ENCODE measurements at regions of chr9 and their contacts with region 1.

Region 1: GRCh38 chr9:114587385-114588202 is at the start of gene ATP6V1G1:
- DNase-seq: peak; percentile 100
- H3K4me3 ChIP-seq: peak within 1 kb of the TSS; percentile 84
- CTCF ChIP-seq: peak in 1 of 3 donors; percentile 27
- POLR2A ChIP-seq: no peak
- total RNA-seq, gene ATP6V1G1: 152 to 214 (median 185) TPM

Region 2: GRCh38 chr9:114518599-114519022 is 69.0 kb before region 1 on chr9:
- intact Hi-C with region 1: loop called (anchors 10 kb)
- DNase-seq: peak in 1 of 2 donors; percentile 68
- H3K4me3 ChIP-seq: no peak overlapping the region
- CTCF ChIP-seq: no peak
- POLR2A ChIP-seq: no peak

Region 3: DNA sequence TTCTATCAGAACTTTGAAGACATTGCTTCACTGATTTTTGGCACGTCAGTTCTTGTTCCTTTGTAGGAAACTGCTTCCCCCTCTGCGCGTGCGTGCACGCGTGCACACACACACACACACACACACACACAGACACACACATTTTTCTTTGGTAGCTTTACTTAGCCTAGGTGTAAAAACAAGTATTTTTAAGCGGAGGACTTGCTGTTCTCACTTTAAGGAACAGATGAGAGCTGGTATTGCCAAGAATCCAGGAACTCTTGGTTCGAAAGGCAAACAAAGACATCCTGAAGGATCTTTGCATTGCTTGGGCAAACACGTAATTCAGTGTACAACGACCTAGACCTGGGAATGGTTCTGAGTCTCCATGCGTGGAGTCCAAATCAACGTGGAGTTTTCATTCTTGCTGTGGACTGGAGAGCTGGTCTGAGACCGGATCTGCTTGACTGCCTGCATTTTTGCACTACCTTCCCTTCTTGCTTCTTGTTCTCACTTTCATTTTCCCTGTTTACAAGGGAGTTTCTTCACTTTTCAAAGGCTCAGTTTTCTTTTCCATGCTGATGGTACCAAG is 31.7 kb after region 1 on chr9:
- intact Hi-C with region 1: no loop called
- DNase-seq: no peak
- H3K4me3 ChIP-seq: no peak overlapping the region
- CTCF ChIP-seq: no peak
- POLR2A ChIP-seq: no peak

Measured in lower leg skin (tissue), 4 donors.